SK-N-SH (cell line): ENCODE measurements at regions of chr1 and their contacts with region 1.

Region 1: GRCh38 chr1:154479764-154480421 is 22.1 kb upstream of the TDRD10 start:
- DNase-seq: peak; percentile 84
- H3K4me3 ChIP-seq: no peak overlapping the region; a peak in 1 of 4 replicates
- H3K27ac ChIP-seq: peak overlapping the region; percentile 17 to 78; a peak in 2 of 4 replicates
- H3K4me1 ChIP-seq: peaks cover 5 to 18% of the 10 kb centered on the region in 2 experiments; a peak in 2 of 4 replicates
- H3K27me3 ChIP-seq: no peaks in the 10 kb centered on the region
- CTCF ChIP-seq: peak; percentile 96
- EP300 ChIP-seq: no peak
- RAD21 ChIP-seq: peak; percentile 99

Region 2: GRCh38 chr1:154324669-154325582 is 155.0 kb before region 1 on chr1 and contains the start of gene ATP8B2:
- CTCF ChIA-PET with region 1: interaction called, 10 read pairs
- POLR2A ChIA-PET with region 1: no interaction called
- DNase-seq: peak; percentile 92
- H3K4me3 ChIP-seq: peak within 1 kb of the TSS; percentile 78 to 84
- H3K27ac ChIP-seq: peak within 1 kb of the TSS; percentile 88 to 92
- H3K4me1 ChIP-seq: peaks cover 21 to 43% of the 10 kb centered on the region in 2 experiments; a peak in 3 of 4 replicates
- H3K27me3 ChIP-seq: no peaks in the 10 kb centered on the region; the same call in 1 of the 2 replicates
- CTCF ChIP-seq: peak; percentile 96
- EP300 ChIP-seq: no peak
- RAD21 ChIP-seq: peak; percentile 51
- polyA plus RNA-seq, gene ATP8B2: 42.7 and 50.7 TPM in 2 replicates

Region 3: DNA sequence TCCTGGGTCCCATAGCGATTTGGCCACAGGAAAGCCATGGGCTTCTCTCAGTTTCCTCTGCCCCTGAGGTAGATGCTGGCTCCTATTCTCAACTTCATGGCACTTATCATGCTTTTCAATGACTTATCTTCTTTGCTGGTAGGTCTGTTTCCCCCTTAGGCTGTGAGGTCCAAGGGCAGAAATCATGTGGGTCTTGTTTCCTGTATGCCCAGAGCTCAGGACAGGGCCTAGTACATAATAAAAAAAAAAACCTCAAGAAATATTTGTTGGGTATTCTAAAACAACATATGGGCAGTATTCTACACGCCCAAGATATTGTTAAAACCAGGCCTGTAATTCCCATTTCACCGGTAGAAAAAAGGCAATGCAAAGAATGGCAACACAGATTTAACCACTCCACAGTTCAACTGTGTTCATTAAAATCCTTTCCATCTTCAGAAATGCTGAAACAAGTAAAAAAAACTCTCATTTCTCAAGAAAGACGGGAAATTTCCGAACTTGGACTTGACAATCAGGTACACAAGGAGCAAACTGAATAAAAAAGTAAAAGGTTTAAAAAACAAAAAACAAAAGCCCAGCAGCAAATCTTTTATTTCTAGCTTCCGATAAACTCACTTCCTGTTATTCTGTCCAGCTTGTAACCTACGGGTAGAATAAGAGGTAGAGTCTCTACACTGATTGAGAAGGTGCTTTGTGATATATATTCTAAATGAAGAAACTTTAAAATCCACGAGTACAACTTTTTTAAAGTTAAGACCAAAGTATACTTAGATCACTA is 15.8 kb after region 1 on chr1:
- CTCF ChIA-PET with region 1: interaction called, 19 read pairs
- POLR2A ChIA-PET with region 1: no interaction called
- DNase-seq: no peak
- H3K4me3 ChIP-seq: no peak overlapping the region
- H3K27ac ChIP-seq: no peak overlapping the region
- H3K4me1 ChIP-seq: peaks cover 0 to 7% of the 10 kb centered on the region in 2 experiments; a peak in 1 of 4 replicates
- H3K27me3 ChIP-seq: peaks cover 71% of the 10 kb centered on the region
- CTCF ChIP-seq: no peak
- EP300 ChIP-seq: no peak
- RAD21 ChIP-seq: no peak

Region 4: GRCh38 chr1:154533952-154534844 is 54.3 kb after region 1 on chr1:
- CTCF ChIA-PET with region 1: interaction called, 36 read pairs
- POLR2A ChIA-PET with region 1: no interaction called
- DNase-seq: peak; percentile 71
- H3K4me3 ChIP-seq: no peak overlapping the region
- H3K27ac ChIP-seq: no peak overlapping the region
- H3K4me1 ChIP-seq: no peaks in the 10 kb centered on the region
- H3K27me3 ChIP-seq: no peaks in the 10 kb centered on the region; the same call in 1 of the 2 replicates
- CTCF ChIP-seq: peak; percentile 50
- EP300 ChIP-seq: no peak
- RAD21 ChIP-seq: peak; percentile 71

Region 5: GRCh38 chr1:154546264-154547063 is 66.6 kb after region 1 on chr1:
- CTCF ChIA-PET with region 1: interaction called, 187 read pairs
- POLR2A ChIA-PET with region 1: interaction called, 3 read pairs
- DNase-seq: peak; percentile 88
- H3K4me3 ChIP-seq: no peak overlapping the region; a peak in 1 of 4 replicates
- H3K27ac ChIP-seq: peak overlapping the region in 1 of 2 experiments; percentile 78; a peak in 2 of 4 replicates
- H3K4me1 ChIP-seq: peaks cover 0 to 22% of the 10 kb centered on the region in 2 experiments; a peak in 1 of 4 replicates
- H3K27me3 ChIP-seq: peaks cover 2% of the 10 kb centered on the region; the same call in 1 of the 2 replicates
- CTCF ChIP-seq: peak; percentile 69
- EP300 ChIP-seq: no peak
- RAD21 ChIP-seq: peak; percentile 89